ENCODE measurements at regions of chr2 and their contacts with region 1.

Region 1: DNA sequence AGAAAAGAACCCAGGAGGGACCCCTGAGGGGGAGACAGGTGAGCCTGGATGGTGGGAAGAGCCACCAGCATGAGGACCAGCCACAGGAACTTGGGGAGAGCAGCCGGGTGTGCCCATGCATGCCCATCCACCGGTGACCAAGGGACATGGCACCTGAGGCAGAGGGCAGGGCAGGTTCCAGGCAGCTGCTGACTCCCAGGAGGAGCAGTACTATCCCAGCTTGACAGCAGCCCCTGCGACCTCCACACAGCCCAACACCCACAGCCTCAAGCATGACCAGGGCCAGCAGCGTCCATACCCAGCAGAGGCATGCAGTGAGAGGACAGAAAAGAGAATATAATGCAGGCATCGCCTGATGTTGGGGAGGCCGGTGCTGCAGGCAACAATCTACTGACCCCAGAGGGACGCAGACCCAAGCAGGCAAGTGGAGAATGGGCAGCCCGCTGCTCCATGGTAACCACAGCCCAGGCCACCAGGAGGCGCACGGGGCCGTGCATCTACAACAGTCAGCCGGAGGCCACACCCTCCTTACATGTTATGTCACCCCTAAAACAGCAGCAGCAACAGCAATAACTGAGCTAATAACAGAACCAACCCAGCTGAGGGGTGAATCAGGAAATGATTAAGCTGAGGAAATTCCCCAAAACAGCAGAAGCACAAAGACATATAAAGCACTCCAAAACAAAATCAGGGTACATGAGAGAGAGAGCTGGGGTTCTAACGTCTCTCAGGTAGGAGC is 44.1 kb downstream of the ANKMY1 start:
- H3K4me3 Mint-ChIP-seq: no peak overlapping the region
- H3K27ac Mint-ChIP-seq: peak overlapping the region; percentile 83
- H3K4me1 Mint-ChIP-seq: peaks cover 20% of the 10 kb centered on the region
- H3K27me3 Mint-ChIP-seq: no peaks in the 10 kb centered on the region

Region 2: DNA sequence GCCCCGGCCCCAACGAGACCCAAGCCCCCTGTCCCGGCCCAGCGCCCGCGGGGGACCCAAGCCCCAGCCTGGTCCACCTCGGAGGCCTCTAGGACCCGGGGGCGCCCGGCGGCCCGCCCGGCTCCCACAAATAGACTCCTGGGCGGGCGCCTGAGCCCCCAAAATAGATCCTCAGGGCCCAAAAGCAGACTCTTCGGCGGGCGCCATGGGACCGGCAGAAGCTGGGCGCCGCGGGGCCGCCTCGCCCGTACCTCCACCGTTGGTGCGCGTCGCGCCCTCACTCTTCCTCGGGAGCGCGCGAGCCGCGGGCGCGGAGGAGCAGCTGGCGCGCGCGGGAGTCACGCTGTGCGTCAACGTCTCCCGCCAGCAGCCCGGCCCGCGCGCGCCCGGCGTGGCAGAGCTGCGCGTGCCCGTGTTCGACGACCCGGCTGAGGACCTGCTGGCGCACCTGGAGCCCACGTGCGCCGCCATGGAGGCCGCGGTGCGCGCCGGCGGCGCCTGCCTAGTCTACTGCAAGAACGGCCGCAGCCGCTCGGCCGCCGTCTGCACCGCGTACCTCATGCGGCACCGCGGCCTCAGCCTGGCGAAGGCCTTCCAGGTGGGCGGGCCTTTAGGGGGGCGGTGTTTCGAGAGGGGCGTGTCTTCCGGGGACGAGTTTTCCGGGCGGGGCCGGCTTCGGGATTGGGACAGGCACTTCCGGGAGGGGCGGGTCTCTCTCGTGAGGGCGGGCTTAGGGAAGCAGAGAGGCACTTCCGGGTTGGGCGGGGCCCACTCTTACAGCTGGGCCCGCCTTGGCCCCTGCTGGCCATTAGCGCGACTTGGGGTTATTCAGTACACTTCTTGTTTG is 47.0 kb after region 1 on chr2:
- intact Hi-C with region 1: loop called (anchors 2 kb)
- H3K4me3 Mint-ChIP-seq: peak overlapping the region; percentile 78
- H3K27ac Mint-ChIP-seq: peak overlapping the region; percentile 92
- H3K4me1 Mint-ChIP-seq: peaks cover 78% of the 10 kb centered on the region
- H3K27me3 Mint-ChIP-seq: no peaks in the 10 kb centered on the region

Region 3: DNA sequence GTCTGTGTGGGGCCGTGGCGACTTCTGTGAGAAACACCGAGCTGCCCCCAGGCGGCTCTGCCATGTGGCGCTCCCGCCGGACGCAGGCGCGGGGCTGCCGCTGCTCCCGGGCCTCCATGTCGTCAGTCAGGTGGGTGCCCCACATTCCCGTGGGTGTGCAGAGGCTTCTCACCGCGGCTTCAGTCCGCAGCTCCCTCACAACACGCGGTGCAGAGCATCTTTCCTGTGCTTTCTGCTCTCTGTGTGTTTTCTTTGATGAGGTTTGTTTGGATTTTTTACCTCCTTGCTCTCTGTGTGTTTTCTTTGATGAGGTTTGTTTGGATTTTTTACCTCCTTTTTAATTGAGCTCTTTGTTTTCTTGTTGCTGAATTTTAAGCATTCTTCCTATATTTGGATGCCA is 190.9 kb after region 1 on chr2:
- intact Hi-C with region 1: loop called (anchors 5 kb)
- H3K4me3 Mint-ChIP-seq: no peak overlapping the region
- H3K27ac Mint-ChIP-seq: peak overlapping the region; percentile 66
- H3K4me1 Mint-ChIP-seq: peaks cover 19% of the 10 kb centered on the region
- H3K27me3 Mint-ChIP-seq: peaks cover 8% of the 10 kb centered on the region

Region 4: GRCh38 chr2:240840435-240841080 is 326.8 kb after region 1 on chr2:
- intact Hi-C with region 1: loop called (anchors 10 kb)
- H3K4me3 Mint-ChIP-seq: no peak overlapping the region
- H3K27ac Mint-ChIP-seq: no peak overlapping the region
- H3K4me1 Mint-ChIP-seq: no peaks in the 10 kb centered on the region
- H3K27me3 Mint-ChIP-seq: peaks cover 31% of the 10 kb centered on the region